ENCODE measurements at regions of chr7 and their contacts with region 1.

Region 1: GRCh38 chr7:55593515-55594318 is 21.4 kb upstream of the VOPP1 start:
- DNase-seq: peak; percentile 62 to 79
- ATAC-seq: peak; percentile 65 to 85 (median 82)
- H3K4me3 ChIP-seq: no peak overlapping the region
- H3K27ac ChIP-seq: no peak overlapping the region
- H3K4me1 ChIP-seq: peaks cover 4% of the 10 kb centered on the region
- H3K27me3 ChIP-seq: no peaks in the 10 kb centered on the region
- CTCF ChIP-seq: peak; percentile 68

Region 2: GRCh38 chr7:55280031-55280454 is 313.7 kb before region 1 on chr7:
- intact Hi-C with region 1: loop called in 1 of 2 experiments (anchors 10 kb)
- DNase-seq: peak; percentile 36 to 63
- ATAC-seq: peak; percentile 88 to 98 (median 90)
- H3K4me3 ChIP-seq: no peak overlapping the region
- H3K27ac ChIP-seq: no peak overlapping the region
- H3K4me1 ChIP-seq: no peaks in the 10 kb centered on the region
- H3K27me3 ChIP-seq: no peaks in the 10 kb centered on the region
- CTCF ChIP-seq: peak; percentile 68

Region 3: GRCh38 chr7:55432939-55433784 is 160.6 kb before region 1 on chr7:
- intact Hi-C with region 1: loop called (anchors 5 to 10 kb)
- DNase-seq: no peak
- ATAC-seq: peak; percentile 72 to 84 (median 78)
- H3K4me3 ChIP-seq: no peak overlapping the region
- H3K27ac ChIP-seq: no peak overlapping the region
- H3K4me1 ChIP-seq: no peaks in the 10 kb centered on the region
- H3K27me3 ChIP-seq: no peaks in the 10 kb centered on the region
- CTCF ChIP-seq: peak; percentile 57

Region 4: GRCh38 chr7:55546829-55547228 is 46.9 kb before region 1 on chr7:
- intact Hi-C with region 1: loop called (anchors 5 kb)
- DNase-seq: peak; percentile 86 to 93
- ATAC-seq: peak; percentile 86 to 93 (median 92)
- H3K4me3 ChIP-seq: no peak overlapping the region
- H3K27ac ChIP-seq: peak overlapping the region; percentile 89
- H3K4me1 ChIP-seq: peaks cover 70% of the 10 kb centered on the region
- H3K27me3 ChIP-seq: no peaks in the 10 kb centered on the region
- CTCF ChIP-seq: no peak

Region 5: GRCh38 chr7:55552320-55553023 is 41.2 kb before region 1 on chr7:
- intact Hi-C with region 1: loop called (anchors 5 kb)
- DNase-seq: peak; percentile 33 to 72
- ATAC-seq: peak; percentile 85 to 92 (median 90)
- H3K4me3 ChIP-seq: peak overlapping the region; percentile 53
- H3K27ac ChIP-seq: peak overlapping the region; percentile 89
- H3K4me1 ChIP-seq: peaks cover 63% of the 10 kb centered on the region
- H3K27me3 ChIP-seq: no peaks in the 10 kb centered on the region
- CTCF ChIP-seq: no peak

Region 6: GRCh38 chr7:55651057-55651456 is 57.3 kb after region 1 on chr7:
- intact Hi-C with region 1: no loop called
- DNase-seq: no peak
- ATAC-seq: no peak
- H3K4me3 ChIP-seq: no peak overlapping the region
- H3K27ac ChIP-seq: no peak overlapping the region
- H3K4me1 ChIP-seq: no peaks in the 10 kb centered on the region
- H3K27me3 ChIP-seq: no peaks in the 10 kb centered on the region
- CTCF ChIP-seq: no peak

Region 7: GRCh38 chr7:55818686-55819085 is 225.0 kb after region 1 on chr7:
- intact Hi-C with region 1: no loop called
- DNase-seq: no peak
- ATAC-seq: no peak
- H3K4me3 ChIP-seq: no peak overlapping the region
- H3K27ac ChIP-seq: no peak overlapping the region
- H3K4me1 ChIP-seq: no peaks in the 10 kb centered on the region
- H3K27me3 ChIP-seq: peaks cover 0 to 2% (median 0%) of the 10 kb centered on the region in 3 donors
- CTCF ChIP-seq: no peak

Measured in psoas muscle (tissue), 8 donors.